Calu3 (cell line): ENCODE measurements at regions of chr5 and their contacts with region 1.

Region 1: GRCh38 chr5:56358703-56359681 is 125.9 kb upstream of the ANKRD55 start:
- DNase-seq: peak; percentile 85
- H3K4me3 Mint-ChIP-seq: peak overlapping the region; percentile 24
- H3K27ac Mint-ChIP-seq: peak overlapping the region; percentile 87
- H3K4me1 Mint-ChIP-seq: peaks cover 55% of the 10 kb centered on the region
- H3K27me3 Mint-ChIP-seq: no peaks in the 10 kb centered on the region
- CTCF ChIP-seq: no peak

Region 2: DNA sequence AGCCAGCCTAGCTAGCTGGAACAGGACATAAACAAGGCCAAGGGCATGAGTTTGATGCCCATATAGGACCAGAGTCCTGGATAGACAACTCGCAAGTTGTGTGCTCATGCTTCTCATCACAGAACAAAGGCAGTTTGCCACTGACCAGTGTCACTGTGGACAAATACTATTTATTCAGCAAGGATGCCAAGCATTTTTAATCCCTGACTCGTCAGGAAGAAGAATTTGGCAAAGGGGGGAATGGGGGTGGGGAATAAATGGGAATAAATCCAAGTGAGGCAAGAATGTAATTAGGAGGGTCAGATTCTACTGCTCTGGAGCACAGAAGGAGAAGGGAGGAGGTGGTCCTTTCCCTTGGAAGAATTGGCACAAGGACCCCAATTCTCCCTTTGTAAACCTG is 79.0 kb before region 1 on chr5:
- CTCF ChIA-PET with region 1: no interaction called
- intact Hi-C with region 1: loop called (anchors 2 kb)
- DNase-seq: peak; percentile 29
- H3K4me3 Mint-ChIP-seq: no peak overlapping the region
- H3K27ac Mint-ChIP-seq: peak overlapping the region; percentile 21
- H3K4me1 Mint-ChIP-seq: peaks cover 9% of the 10 kb centered on the region
- H3K27me3 Mint-ChIP-seq: no peaks in the 10 kb centered on the region
- CTCF ChIP-seq: no peak

Region 3: DNA sequence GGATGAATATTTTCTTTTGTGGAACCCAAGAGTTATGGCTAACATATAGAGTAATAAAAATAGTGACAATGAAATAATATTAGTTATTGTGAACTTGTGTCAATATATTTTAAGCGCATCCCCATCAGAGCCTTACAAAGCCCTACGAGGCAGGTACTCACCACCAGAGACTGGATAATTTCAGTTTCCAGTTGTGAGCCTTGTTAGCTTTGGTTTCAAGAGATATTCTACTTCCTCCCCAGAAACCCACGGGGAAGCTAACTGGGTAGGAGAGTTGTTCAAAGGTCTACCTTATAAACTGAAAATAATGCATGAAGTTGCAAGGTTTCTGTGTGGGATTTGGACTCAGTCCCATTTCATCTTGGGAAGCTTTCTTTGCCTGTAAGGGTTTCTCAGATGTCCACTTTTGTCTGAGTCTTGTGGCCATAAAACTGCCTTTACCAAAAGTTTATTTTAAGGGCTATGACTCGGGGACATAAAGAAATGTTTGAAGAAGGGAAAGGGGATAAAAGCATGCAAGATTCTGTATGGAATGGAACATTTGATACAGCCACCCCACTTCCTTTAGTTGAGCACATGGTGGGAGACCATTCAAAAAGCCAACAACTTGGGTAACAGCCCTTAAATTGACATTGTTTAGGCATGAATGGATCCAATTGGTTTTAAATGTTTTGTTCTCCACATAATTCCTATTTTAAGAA is 68.5 kb before region 1 on chr5:
- CTCF ChIA-PET with region 1: no interaction called
- intact Hi-C with region 1: no loop called
- DNase-seq: no peak
- H3K4me3 Mint-ChIP-seq: no peak overlapping the region
- H3K27ac Mint-ChIP-seq: no peak overlapping the region
- H3K4me1 Mint-ChIP-seq: peaks cover 17% of the 10 kb centered on the region
- H3K27me3 Mint-ChIP-seq: no peaks in the 10 kb centered on the region
- CTCF ChIP-seq: no peak

Region 4: DNA sequence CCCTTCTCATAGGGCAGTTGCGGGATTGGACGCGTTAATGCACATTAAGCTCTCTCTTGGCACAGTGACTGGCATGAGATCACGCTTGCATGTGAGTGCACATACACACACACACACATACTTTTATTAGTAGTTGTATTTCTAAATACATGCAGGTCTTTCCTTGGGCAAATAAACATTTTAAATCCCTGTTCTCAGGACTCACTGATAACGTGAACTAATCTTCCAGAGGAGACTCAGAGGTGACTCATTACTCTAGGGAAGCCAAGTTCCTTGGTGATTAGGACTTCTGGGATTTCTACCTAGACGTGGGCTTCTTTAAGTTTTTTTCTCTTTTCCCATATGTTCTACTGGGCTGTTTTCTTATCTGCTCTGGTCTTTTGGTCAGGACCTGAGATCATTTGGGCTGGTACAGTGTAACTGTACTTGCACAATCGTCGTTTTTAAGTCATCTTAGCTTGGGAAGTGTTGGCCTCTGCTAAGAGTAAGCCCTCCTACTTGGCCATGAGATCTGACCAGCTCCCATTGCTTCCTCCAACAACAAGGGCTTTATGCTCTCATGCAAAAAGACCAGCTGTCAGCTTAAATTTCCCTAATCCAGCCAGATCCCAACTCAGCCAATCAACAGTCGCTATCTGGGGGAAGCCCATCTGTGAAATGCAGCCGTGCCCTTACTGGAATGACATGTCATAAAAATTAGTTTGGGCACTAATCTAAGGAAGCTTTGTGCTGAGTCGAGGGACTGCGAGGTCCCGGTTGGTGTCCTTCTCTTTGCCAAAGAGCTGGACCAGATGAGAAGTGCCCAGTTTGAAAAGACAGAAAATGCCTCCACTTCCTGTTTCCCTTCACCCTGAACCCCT is 50.6 kb after region 1 on chr5:
- CTCF ChIA-PET with region 1: no interaction called
- intact Hi-C with region 1: loop called (anchors 5 kb)
- DNase-seq: no peak
- H3K4me3 Mint-ChIP-seq: no peak overlapping the region
- H3K27ac Mint-ChIP-seq: no peak overlapping the region
- H3K4me1 Mint-ChIP-seq: peaks cover 67% of the 10 kb centered on the region
- H3K27me3 Mint-ChIP-seq: no peaks in the 10 kb centered on the region
- CTCF ChIP-seq: no peak

Region 5: DNA sequence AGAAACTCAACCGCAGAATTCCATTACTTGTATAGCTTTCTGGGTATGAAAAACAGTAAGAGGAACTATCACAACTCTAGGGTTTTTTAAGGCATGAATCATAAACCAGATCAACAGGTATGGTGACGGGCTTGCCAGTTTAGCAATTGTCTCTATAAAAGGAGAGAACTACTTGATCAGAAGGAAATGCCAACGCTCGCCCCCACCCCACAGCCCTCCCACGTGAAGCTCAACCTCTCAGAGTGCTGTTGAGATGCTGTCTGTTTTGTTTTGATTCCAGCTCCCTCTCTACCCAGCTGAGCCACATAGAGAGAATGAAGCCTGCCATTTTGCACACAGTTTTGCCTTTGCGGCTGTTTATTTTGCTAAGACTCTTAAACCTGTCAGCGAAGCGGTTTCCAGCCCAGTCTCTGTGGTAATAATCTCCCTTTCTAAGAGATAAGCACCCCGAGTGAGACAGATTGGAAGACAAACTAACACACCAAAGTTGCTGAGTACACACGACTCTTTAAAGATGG is 132.0 kb after region 1 on chr5:
- CTCF ChIA-PET with region 1: interaction called, 4 read pairs
- intact Hi-C with region 1: loop called (anchors 5 kb)
- DNase-seq: peak; percentile 88
- H3K4me3 Mint-ChIP-seq: peak overlapping the region; percentile 22
- H3K27ac Mint-ChIP-seq: peak overlapping the region; percentile 81
- H3K4me1 Mint-ChIP-seq: peaks cover 28% of the 10 kb centered on the region
- H3K27me3 Mint-ChIP-seq: no peaks in the 10 kb centered on the region
- CTCF ChIP-seq: no peak

Region 6: GRCh38 chr5:56814963-56815658 is 456.1 kb after region 1 on chr5 and contains the start of gene MAP3K1:
- CTCF ChIA-PET with region 1: no interaction called
- intact Hi-C with region 1: loop called (anchors 5 kb)
- DNase-seq: peak; percentile 92
- H3K4me3 Mint-ChIP-seq: peak within 1 kb of the TSS; percentile 94
- H3K27ac Mint-ChIP-seq: peak within 1 kb of the TSS; percentile 72
- H3K4me1 Mint-ChIP-seq: peaks cover 10% of the 10 kb centered on the region
- H3K27me3 Mint-ChIP-seq: no peaks in the 10 kb centered on the region
- CTCF ChIP-seq: no peak
- total RNA-seq, gene MAP3K1: 32.9 and 33.1 TPM in 2 replicates